ENCODE measurements at regions of chr3 and their contacts with region 1.

Region 1: GRCh38 chr3:102229062-102229655 is 205.7 kb upstream of the ZPLD1 start:
- DNase-seq: peak; percentile 88
- H3K4me3 Mint-ChIP-seq: no peak overlapping the region
- H3K27ac Mint-ChIP-seq: no peak overlapping the region
- H3K4me1 Mint-ChIP-seq: peaks cover 16% of the 10 kb centered on the region
- H3K27me3 Mint-ChIP-seq: no peaks in the 10 kb centered on the region

Region 2: GRCh38 chr3:101695779-101696372 is 533.3 kb before region 1 on chr3:
- CTCF ChIA-PET with region 1: no interaction called
- intact Hi-C with region 1: loop called (anchors 1 kb)
- DNase-seq: peak; percentile 52
- H3K4me3 Mint-ChIP-seq: no peak overlapping the region
- H3K27ac Mint-ChIP-seq: no peak overlapping the region
- H3K4me1 Mint-ChIP-seq: peaks cover 7% of the 10 kb centered on the region
- H3K27me3 Mint-ChIP-seq: no peaks in the 10 kb centered on the region

Region 3: GRCh38 chr3:101814835-101815234 is 414.3 kb before region 1 on chr3:
- CTCF ChIA-PET with region 1: interaction called, 380 read pairs
- intact Hi-C with region 1: loop called (anchors 1 kb)
- DNase-seq: no peak
- H3K4me3 Mint-ChIP-seq: no peak overlapping the region
- H3K27ac Mint-ChIP-seq: no peak overlapping the region
- H3K4me1 Mint-ChIP-seq: peaks cover 60% of the 10 kb centered on the region
- H3K27me3 Mint-ChIP-seq: no peaks in the 10 kb centered on the region

Region 4: GRCh38 chr3:101936419-101937356 is 292.5 kb before region 1 on chr3:
- CTCF ChIA-PET with region 1: interaction called, 9 read pairs
- intact Hi-C with region 1: loop called (anchors 2 kb)
- DNase-seq: peak; percentile 33
- H3K4me3 Mint-ChIP-seq: peak overlapping the region; percentile 0
- H3K27ac Mint-ChIP-seq: peak overlapping the region; percentile 57
- H3K4me1 Mint-ChIP-seq: peaks cover 32% of the 10 kb centered on the region
- H3K27me3 Mint-ChIP-seq: peaks cover 2% of the 10 kb centered on the region

Region 5: DNA sequence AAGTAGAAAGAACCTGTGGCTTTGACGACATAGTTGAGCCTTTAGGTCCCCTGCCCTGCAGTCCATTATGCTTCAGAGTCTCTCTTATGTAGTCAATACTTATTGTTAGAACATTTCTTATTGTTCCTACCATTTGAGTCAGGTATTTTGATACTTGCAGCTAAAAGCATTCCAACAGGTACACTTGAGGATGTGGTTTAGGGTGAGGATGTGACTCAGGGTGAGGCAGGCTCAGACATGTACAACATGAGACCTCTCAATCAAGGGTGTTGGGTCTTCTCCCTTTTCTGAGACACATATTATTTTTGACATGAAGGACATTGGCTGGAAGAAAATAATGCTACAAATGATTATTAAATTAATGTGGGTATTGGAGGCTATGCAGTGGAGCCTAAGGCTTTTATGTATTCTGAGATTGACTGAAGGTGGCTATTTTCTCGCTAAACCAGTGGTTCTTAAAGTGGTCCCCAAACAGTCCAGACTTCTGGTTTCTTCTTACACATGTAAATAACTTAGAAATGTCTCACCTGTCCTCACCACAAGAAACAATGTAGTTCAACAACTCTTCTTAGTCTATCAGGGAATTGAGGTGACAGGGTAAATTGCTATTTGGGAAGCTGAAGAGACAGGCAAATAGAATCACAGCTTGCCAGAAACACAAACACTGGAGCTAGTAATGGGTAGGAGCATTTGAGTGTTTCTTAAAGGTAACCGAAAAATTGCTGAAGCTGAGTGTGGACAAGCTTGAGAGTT is 70.1 kb after region 1 on chr3:
- CTCF ChIA-PET with region 1: no interaction called
- intact Hi-C with region 1: loop called (anchors 2 kb)
- DNase-seq: peak; percentile 43
- H3K4me3 Mint-ChIP-seq: no peak overlapping the region
- H3K27ac Mint-ChIP-seq: peak overlapping the region; percentile 46
- H3K4me1 Mint-ChIP-seq: peaks cover 2% of the 10 kb centered on the region
- H3K27me3 Mint-ChIP-seq: peaks cover 9% of the 10 kb centered on the region

Region 6: GRCh38 chr3:102544741-102545140 is 315.6 kb after region 1 on chr3:
- CTCF ChIA-PET with region 1: interaction called, 146 read pairs
- intact Hi-C with region 1: no loop called
- DNase-seq: no peak
- H3K4me3 Mint-ChIP-seq: no peak overlapping the region
- H3K27ac Mint-ChIP-seq: no peak overlapping the region
- H3K4me1 Mint-ChIP-seq: no peaks in the 10 kb centered on the region
- H3K27me3 Mint-ChIP-seq: peaks cover 2% of the 10 kb centered on the region

Measured in activated naive CD4-positive, alpha-beta T cell treated with anti-CD3 and anti-CD28 coated beads for 36 hours (primary cell).